KBM-7 (cell line): ENCODE measurements at regions of chr11 and their contacts with region 1.

Region 1: DNA sequence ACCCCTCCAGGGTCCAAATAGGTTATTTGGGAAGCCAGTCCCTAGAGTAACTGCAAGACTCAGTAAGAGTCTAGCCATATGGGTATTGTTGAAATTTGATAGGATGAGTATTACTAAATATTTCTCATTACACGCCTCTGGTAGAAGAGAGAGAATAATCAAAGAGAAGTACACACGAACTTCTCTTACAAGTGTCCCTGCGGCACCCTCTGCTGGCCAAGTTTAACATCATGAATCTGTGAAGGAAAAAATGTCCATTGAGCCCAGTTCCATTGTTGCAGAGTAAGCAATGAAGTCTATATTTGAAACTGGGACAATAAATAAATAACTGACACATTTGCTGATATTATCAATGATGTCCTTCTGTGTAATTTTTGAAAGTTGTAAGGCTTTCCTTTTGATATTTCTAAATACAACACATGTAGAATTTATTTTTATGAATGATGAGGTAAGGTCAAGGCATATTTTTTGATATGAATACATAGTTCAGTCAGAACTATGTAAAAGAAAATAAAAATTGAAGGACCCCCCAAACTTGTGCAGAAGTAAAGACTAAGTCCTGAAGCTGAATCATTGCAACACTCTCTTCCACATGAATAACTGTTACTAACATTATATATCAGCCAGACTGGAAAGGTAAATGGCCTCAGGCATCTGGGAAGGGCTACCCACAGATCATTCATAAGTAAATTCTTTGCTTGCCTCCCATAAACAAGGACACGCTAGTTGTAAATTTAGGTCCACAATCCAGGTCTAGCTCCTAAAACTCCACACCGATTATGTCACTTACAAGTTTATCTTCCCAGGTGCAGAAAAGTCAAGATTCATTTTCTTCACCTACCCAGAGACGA is 10.0 kb downstream of the OR51L1 start:
- DNase-seq: peak; percentile 44

Region 2: DNA sequence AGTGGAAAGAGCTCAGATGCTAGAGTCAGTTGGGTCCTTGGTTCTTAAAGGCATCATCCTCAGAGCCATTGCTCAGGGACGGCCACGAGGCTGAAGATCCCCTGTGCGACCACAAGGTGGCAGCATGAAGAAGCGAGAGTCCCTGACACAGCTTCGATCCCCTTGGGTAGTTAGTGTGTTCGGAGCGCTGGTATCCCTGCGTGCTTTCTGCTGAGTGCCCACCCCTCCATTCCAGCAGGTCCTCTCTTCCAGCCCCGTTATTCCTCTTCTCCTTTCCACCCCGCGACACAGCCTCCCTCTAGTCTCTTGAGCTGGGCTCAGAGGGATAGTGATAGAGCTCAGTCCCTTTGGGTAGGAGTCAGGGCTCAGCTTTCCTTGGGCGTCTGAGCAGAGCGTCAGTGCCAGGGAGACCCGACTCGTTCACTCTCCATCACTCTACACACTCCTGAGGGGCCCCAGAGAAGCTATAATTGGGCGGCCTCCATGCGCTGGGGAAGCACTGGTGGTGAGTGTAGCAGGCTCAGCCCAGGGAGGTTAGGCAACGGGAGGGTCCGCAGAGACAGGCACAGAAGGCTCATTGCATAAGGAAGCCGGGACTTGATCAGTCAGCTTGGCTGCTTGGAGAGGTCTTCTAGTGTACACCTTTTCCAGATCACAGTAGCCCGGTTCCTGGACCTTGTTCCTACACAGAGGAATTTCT is 367.5 kb before region 1 on chr11 and contains the start of gene OR51D1:
- in situ Hi-C with region 1: loop called (anchors 25 kb)
- DNase-seq: peak; percentile 71

Region 3: GRCh38 chr11:5476184-5476819 is 471.7 kb after region 1 on chr11:
- in situ Hi-C with region 1: no loop called
- DNase-seq: peak; percentile 38